ENCODE measurements at regions of chrX and their contacts with region 1.

Region 1: DNA sequence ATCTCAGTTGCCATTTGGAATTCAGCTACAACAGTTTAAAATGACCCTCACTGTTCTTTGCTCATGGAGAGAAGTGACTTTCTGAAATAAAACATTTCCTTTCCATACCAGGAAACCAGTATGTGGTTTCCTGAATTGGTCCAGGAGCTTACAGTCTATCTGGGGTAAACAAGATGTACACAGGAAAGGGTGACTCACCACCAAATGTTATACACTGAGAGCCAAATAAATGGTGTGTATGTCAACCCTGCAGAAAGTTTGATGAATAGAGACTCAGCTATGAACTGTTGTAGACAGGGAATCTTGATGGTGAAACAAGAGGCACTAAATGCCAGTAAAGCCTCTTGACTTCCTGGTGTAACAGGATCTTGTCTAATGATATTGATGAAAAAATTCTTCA is 100.4 kb downstream of the HS6ST2 start:
- DNase-seq: peak; percentile 60
- ATAC-seq: peak; percentile 66
- H3K4me3 ChIP-seq: no peak overlapping the region
- H3K27ac ChIP-seq: peak overlapping the region; percentile 36
- H3K4me1 ChIP-seq: peaks cover 19% of the 10 kb centered on the region
- H3K27me3 ChIP-seq: no peaks in the 10 kb centered on the region
- CTCF ChIP-seq: no peak

Region 2: DNA sequence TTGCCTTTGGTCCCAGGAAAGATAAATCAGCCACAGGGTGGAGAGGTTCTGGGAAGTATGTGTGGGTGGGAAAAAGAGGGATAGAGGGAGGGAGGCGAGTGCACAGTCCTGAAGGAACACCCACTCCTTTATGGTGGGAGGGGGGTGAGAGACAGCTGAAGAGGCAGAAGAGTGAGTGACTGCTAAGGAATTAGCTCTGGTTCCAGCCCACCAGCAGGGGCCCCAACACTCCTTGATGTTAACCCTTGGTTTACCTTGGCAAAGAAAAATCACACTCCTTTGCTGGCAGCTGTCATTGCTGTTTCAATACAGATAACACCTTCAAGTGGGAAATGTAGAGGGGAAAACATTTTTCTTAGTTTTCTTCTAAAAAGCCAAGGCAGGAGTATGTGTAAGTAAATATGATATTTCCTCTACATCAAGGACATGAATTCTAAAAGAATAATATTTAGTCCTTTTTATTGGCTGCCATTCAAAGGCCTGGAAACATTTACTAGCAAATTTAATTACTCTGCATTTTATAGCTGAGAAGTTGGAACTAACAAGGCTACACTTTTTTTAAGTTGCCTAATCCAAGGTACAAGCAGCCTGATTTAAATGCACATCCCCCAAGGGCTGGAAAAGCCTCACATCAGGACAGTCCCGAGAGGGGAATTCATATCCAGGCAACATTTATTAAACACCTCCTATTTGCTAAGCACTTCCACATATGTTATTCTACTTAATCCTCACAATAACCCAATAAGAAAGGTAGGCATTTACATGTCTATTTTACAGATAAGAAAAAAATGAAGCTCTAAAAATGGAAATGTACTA is 18.7 kb after region 1 on chrX:
- CTCF ChIA-PET with region 1: no interaction called
- POLR2A ChIA-PET with region 1: no interaction called
- intact Hi-C with region 1: loop called (anchors 2 kb)
- DNase-seq: no peak
- ATAC-seq: peak; percentile 57
- H3K4me3 ChIP-seq: no peak overlapping the region
- H3K27ac ChIP-seq: 0 out of 2 replicates have a peak overlapping the region, but pooled peaks have one; percentile 54
- H3K4me1 ChIP-seq: peaks cover 22% of the 10 kb centered on the region
- H3K27me3 ChIP-seq: no peaks in the 10 kb centered on the region
- CTCF ChIP-seq: no peak

Region 3: DNA sequence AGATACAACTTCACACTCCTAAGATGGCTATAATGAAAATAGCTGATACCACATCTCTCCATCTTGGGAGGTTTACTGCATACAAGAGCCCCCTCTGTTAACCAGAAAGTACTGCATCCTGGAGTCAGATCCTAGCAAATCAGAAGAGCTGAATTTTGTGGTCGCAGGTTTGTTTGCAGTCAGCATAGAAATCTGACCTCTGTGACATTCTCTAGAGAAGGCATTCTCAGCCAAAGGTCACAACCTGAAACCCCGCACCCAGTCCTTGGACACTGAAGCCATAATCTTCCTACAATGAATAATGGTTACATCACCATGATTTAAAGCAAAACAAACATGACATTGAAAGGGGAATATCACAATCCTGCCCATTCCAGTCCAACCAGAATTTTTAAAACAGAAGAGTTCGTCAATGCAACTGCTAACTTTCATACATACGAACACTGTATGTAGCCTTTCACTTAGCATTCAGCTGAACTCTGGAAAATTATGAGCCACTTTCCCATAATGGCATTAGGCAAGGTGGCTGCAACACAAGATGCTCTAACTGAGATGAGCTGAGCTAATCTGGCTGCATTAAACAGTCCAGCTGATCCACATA is 82.8 kb after region 1 on chrX:
- CTCF ChIA-PET with region 1: no interaction called
- POLR2A ChIA-PET with region 1: no interaction called
- intact Hi-C with region 1: loop called (anchors 5 kb)
- DNase-seq: peak; percentile 90
- ATAC-seq: peak; percentile 86
- H3K4me3 ChIP-seq: peak overlapping the region; percentile 61
- H3K27ac ChIP-seq: peak overlapping the region; percentile 99
- H3K4me1 ChIP-seq: peaks cover 26% of the 10 kb centered on the region
- H3K27me3 ChIP-seq: no peaks in the 10 kb centered on the region
- CTCF ChIP-seq: peak; percentile 49

Region 4: GRCh38 chrX:132957211-132958090 is 99.4 kb after region 1 on chrX:
- CTCF ChIA-PET with region 1: no interaction called
- POLR2A ChIA-PET with region 1: no interaction called
- intact Hi-C with region 1: no loop called
- DNase-seq: no peak
- ATAC-seq: peak; percentile 25
- H3K4me3 ChIP-seq: peak overlapping the region; percentile 71
- H3K27ac ChIP-seq: no peak overlapping the region
- H3K4me1 ChIP-seq: peaks cover 54% of the 10 kb centered on the region
- H3K27me3 ChIP-seq: no peaks in the 10 kb centered on the region
- CTCF ChIP-seq: no peak